H1 (cell line): ENCODE measurements at regions of chr3 and their contacts with region 1.

Region 1: GRCh38 chr3:2713923-2714322 is 396.3 kb downstream of the IL5RA start:
- DNase-seq: no peak
- H3K4me3 ChIP-seq: no peak overlapping the region
- H3K27ac ChIP-seq: no peak overlapping the region
- H3K4me1 ChIP-seq: no peaks in the 10 kb centered on the region
- H3K27me3 ChIP-seq: no peaks in the 10 kb centered on the region
- CTCF ChIP-seq: peak in 1 of 3 experiments; percentile 38; a peak in 2 of 4 replicates
- EP300 ChIP-seq: no peak
- POLR2A ChIP-seq: no peak
- RAD21 ChIP-seq: peak; percentile 19 to 26; a peak in 2 of 4 replicates

Region 2: DNA sequence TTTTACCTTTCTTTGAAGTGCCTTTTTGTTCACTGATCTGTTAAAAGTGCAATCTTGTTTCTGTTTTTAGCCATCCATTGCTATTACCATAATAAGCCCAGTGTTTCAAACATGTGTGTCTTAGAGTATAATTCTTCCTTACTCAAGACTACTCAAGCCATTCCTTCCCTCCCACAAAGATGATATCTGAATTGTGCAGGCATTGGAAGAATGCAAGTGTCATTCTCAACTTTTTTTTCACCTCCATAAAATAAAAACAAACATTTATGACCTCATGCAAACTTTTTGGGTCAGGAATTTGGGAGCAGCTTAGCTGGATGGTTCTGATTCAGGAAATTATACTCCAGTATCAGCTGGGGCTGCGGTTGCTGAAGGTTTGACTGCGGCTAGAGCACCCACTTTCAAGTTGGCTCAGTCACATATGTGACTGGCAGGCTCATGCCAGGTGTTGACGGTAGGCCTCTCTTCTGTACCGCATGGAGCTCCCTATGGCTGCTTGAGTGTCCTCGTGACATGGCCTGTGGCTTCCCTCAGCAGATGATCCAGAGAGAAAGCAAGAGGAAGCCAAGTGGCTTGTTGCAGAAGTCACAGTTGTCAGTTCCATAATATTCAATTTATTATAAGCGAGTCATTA is 124.5 kb before region 1 on chr3:
- CTCF ChIA-PET with region 1: no interaction called
- POLR2A ChIA-PET with region 1: no interaction called
- DNase-seq: no peak
- H3K4me3 ChIP-seq: no peak overlapping the region
- H3K27ac ChIP-seq: no peak overlapping the region
- H3K4me1 ChIP-seq: no peaks in the 10 kb centered on the region
- H3K27me3 ChIP-seq: no peaks in the 10 kb centered on the region
- CTCF ChIP-seq: no peak
- EP300 ChIP-seq: no peak
- POLR2A ChIP-seq: no peak
- RAD21 ChIP-seq: no peak

Region 3: GRCh38 chr3:2727610-2728318 is 13.8 kb after region 1 on chr3:
- CTCF ChIA-PET with region 1: interaction called, 13 read pairs
- POLR2A ChIA-PET with region 1: no interaction called
- DNase-seq: no peak
- H3K4me3 ChIP-seq: no peak overlapping the region
- H3K27ac ChIP-seq: no peak overlapping the region
- H3K4me1 ChIP-seq: peaks cover 0 to 2% (median 1%) of the 10 kb centered on the region in 4 experiments; a peak in 1 of 7 replicates
- H3K27me3 ChIP-seq: no peaks in the 10 kb centered on the region; a peak in 1 of 7 replicates
- CTCF ChIP-seq: no peak
- EP300 ChIP-seq: no peak
- POLR2A ChIP-seq: no peak
- RAD21 ChIP-seq: no peak

Region 4: GRCh38 chr3:2735392-2735894 is 21.5 kb after region 1 on chr3:
- CTCF ChIA-PET with region 1: interaction called, 20 read pairs
- POLR2A ChIA-PET with region 1: no interaction called
- DNase-seq: no peak
- H3K4me3 ChIP-seq: no peak overlapping the region
- H3K27ac ChIP-seq: no peak overlapping the region
- H3K4me1 ChIP-seq: no peaks in the 10 kb centered on the region
- H3K27me3 ChIP-seq: no peaks in the 10 kb centered on the region
- CTCF ChIP-seq: no peak
- EP300 ChIP-seq: no peak
- POLR2A ChIP-seq: no peak
- RAD21 ChIP-seq: no peak

Region 5: GRCh38 chr3:2921903-2922302 is 208.0 kb after region 1 on chr3:
- CTCF ChIA-PET with region 1: interaction called, 15 read pairs
- POLR2A ChIA-PET with region 1: no interaction called
- DNase-seq: no peak
- H3K4me3 ChIP-seq: no peak overlapping the region
- H3K27ac ChIP-seq: no peak overlapping the region
- H3K4me1 ChIP-seq: no peaks in the 10 kb centered on the region
- H3K27me3 ChIP-seq: no peaks in the 10 kb centered on the region
- CTCF ChIP-seq: peak in 2 of 3 experiments; percentile 28 to 31; a peak in 2 of 4 replicates
- EP300 ChIP-seq: no peak
- POLR2A ChIP-seq: no peak
- RAD21 ChIP-seq: peak; percentile 70 to 75